ENCODE measurements at regions of chr20 and their contacts with region 1.

Region 1: DNA sequence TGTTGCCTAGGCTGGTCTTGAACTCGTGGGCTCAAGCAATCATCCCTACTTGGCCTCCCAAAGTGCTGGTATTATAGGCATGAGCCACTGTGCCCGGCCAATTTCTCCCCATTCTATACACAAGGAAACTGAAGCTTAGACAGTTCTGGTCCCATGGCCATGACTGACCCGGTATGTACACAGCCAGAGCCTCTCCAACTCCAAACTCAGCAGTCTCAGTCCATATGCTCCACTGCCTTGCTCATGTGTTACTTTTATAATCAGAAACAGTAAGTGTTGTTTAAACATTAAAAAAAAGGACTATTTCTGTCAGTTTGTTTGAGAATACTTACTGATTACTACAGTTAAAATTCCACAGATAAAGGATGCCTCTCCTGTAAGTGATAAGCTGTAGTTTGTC is 50.6 kb downstream of the RNF24 start:
- DNase-seq: no peak
- CTCF ChIP-seq: no peak

Region 2: GRCh38 chr20:3940905-3941304 is 23.8 kb before region 1 on chr20:
- CTCF ChIA-PET with region 1: interaction called, 10 read pairs
- POLR2A ChIA-PET with region 1: no interaction called
- DNase-seq: no peak
- CTCF ChIP-seq: no peak